Sciatic nerve (tissue), 2 donors: ENCODE measurements at regions of chr9 and their contacts with region 1.

Region 1: GRCh38 chr9:116383946-116384345 is 230.4 kb downstream of the PAPPA start:
- DNase-seq: no peak
- ATAC-seq: no peak

Region 2: GRCh38 chr9:115531410-115532125 is 852.4 kb before region 1 on chr9:
- intact Hi-C with region 1: loop called (anchors 5 kb)
- DNase-seq: no peak
- ATAC-seq: peak; percentile 41